H1 (cell line): ENCODE measurements at regions of chr20 and their contacts with region 1.

Region 1: DNA sequence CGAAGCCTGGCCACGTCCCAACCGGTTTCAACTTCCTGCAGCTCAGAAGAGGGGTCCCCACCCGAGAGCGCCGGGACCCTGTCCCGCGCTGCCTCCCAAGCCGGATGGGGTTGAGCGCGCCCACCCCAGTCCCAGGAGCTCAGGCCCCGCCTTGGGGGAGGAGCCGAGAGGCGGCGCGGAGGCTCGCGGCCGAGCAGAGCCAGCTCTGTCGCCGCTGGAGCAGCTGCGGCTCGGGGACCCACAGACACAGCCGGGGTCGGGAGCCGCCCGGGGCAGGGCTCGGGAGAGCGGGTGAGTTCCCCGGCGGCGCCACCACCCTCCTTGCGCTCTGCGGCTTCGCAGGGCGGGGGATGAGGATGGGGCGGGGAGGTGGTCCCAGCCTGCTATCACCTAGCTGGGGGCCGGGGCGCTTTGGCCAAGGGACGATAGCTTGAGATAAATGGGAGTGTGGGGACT is at the start of gene PPP1R16B:
- DNase-seq: peak in 1 of 2 experiments; percentile 87
- H3K4me3 ChIP-seq: peak within 1 kb of the TSS; percentile 62 to 87 (median 63)
- H3K27ac ChIP-seq: no peak within 1 kb of the TSS
- H3K4me1 ChIP-seq: peaks cover 13 to 18% (median 15%) of the 10 kb centered on the region in 4 experiments
- H3K27me3 ChIP-seq: peaks cover 4 to 25% (median 17%) of the 10 kb centered on the region in 4 experiments; a peak in 6 of 7 replicates
- CTCF ChIP-seq: no peak
- EP300 ChIP-seq: no peak
- POLR2A ChIP-seq: peak in 1 of 2 experiments; percentile 73; a peak in 1 of 3 replicates
- RAD21 ChIP-seq: no peak
- total RNA-seq, gene PPP1R16B: 8.9 and 9.7 TPM in 2 replicates

Region 2: GRCh38 chr20:38790200-38791053 is 15.1 kb before region 1 on chr20:
- CTCF ChIA-PET with region 1: interaction called, 5 read pairs
- POLR2A ChIA-PET with region 1: interaction called, 18 read pairs
- DNase-seq: no peak
- H3K4me3 ChIP-seq: no peak overlapping the region
- H3K27ac ChIP-seq: no peak overlapping the region
- H3K4me1 ChIP-seq: no peaks in the 10 kb centered on the region; a peak in 1 of 7 replicates
- H3K27me3 ChIP-seq: no peaks in the 10 kb centered on the region
- CTCF ChIP-seq: peak; percentile 36 to 72 (median 70)
- EP300 ChIP-seq: no peak
- POLR2A ChIP-seq: no peak
- RAD21 ChIP-seq: peak; percentile 75 to 80

Region 3: GRCh38 chr20:38818113-38819065 is 12.9 kb after region 1 on chr20:
- CTCF ChIA-PET with region 1: interaction called, 14 read pairs
- POLR2A ChIA-PET with region 1: interaction called, 8 read pairs
- DNase-seq: no peak
- H3K4me3 ChIP-seq: no peak overlapping the region
- H3K27ac ChIP-seq: no peak overlapping the region
- H3K4me1 ChIP-seq: peaks cover 2 to 12% (median 4%) of the 10 kb centered on the region in 4 experiments
- H3K27me3 ChIP-seq: no peaks in the 10 kb centered on the region
- CTCF ChIP-seq: no peak
- EP300 ChIP-seq: no peak
- POLR2A ChIP-seq: no peak
- RAD21 ChIP-seq: no peak